Breast epithelium (tissue), 4 donors: ENCODE measurements at regions of chr3 and their contacts with region 1.

Region 1: GRCh38 chr3:55690726-55691125 is 203.6 kb upstream of the WNT5A start:
- DNase-seq: no peak
- H3K4me3 ChIP-seq: no peak overlapping the region
- H3K27ac ChIP-seq: no peak overlapping the region
- H3K4me1 ChIP-seq: no peaks in the 10 kb centered on the region
- H3K27me3 ChIP-seq: no peaks in the 10 kb centered on the region
- CTCF ChIP-seq: no peak
- POLR2A ChIP-seq: no peak

Region 2: GRCh38 chr3:54443561-54444161 is 1247.1 kb before region 1 on chr3:
- intact Hi-C with region 1: no loop called
- DNase-seq: peak in 1 of 2 donors; percentile 61
- H3K4me3 ChIP-seq: no peak overlapping the region
- H3K27ac ChIP-seq: no peak overlapping the region
- H3K4me1 ChIP-seq: no peaks in the 10 kb centered on the region
- H3K27me3 ChIP-seq: no peaks in the 10 kb centered on the region
- CTCF ChIP-seq: no peak
- POLR2A ChIP-seq: no peak

Region 3: DNA sequence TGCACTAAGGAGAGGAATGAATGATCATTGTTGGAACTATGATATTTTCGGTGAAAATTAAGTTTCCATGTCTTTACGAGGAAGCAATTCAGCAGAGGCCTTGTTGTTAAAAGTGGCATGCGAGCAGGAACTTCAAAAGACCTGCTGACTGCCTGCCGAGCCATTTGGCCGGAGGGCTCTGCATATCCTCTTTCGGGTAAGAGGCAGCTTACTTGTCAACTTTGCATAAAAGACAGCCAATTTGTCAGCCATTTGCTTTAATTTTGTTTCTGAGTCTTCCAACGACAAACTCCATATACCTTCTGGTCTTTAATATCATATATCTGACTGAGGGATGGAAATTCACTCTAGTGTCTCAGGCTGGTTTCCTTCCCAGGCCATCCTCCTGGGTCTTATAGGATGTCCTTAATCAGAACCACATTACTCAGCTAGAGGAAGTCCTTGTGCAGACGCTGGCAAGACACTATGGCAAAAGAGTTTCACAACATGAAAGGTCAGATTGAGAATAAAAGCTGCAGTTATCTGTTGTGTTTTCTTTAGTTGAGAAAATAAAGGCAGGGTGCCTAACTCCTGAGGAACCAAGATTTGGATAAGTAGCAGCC is 74.9 kb before region 1 on chr3:
- intact Hi-C with region 1: loop called (anchors 5 kb)
- DNase-seq: peak in 1 of 2 donors; percentile 47
- H3K4me3 ChIP-seq: no peak overlapping the region
- H3K27ac ChIP-seq: peak overlapping the region; percentile 34 to 68
- H3K4me1 ChIP-seq: no peaks in the 10 kb centered on the region
- H3K27me3 ChIP-seq: no peaks in the 10 kb centered on the region
- CTCF ChIP-seq: no peak
- POLR2A ChIP-seq: no peak

Region 4: GRCh38 chr3:55721716-55722484 is 31.2 kb after region 1 on chr3:
- intact Hi-C with region 1: no loop called
- DNase-seq: no peak
- H3K4me3 ChIP-seq: no peak overlapping the region
- H3K27ac ChIP-seq: no peak overlapping the region
- H3K4me1 ChIP-seq: no peaks in the 10 kb centered on the region
- H3K27me3 ChIP-seq: no peaks in the 10 kb centered on the region
- CTCF ChIP-seq: peak in 2 of 3 donors; percentile 16 to 50
- POLR2A ChIP-seq: no peak